Prostate gland (tissue), 2 donors: ENCODE measurements at regions of chr14 and their contacts with region 1.

Region 1: DNA sequence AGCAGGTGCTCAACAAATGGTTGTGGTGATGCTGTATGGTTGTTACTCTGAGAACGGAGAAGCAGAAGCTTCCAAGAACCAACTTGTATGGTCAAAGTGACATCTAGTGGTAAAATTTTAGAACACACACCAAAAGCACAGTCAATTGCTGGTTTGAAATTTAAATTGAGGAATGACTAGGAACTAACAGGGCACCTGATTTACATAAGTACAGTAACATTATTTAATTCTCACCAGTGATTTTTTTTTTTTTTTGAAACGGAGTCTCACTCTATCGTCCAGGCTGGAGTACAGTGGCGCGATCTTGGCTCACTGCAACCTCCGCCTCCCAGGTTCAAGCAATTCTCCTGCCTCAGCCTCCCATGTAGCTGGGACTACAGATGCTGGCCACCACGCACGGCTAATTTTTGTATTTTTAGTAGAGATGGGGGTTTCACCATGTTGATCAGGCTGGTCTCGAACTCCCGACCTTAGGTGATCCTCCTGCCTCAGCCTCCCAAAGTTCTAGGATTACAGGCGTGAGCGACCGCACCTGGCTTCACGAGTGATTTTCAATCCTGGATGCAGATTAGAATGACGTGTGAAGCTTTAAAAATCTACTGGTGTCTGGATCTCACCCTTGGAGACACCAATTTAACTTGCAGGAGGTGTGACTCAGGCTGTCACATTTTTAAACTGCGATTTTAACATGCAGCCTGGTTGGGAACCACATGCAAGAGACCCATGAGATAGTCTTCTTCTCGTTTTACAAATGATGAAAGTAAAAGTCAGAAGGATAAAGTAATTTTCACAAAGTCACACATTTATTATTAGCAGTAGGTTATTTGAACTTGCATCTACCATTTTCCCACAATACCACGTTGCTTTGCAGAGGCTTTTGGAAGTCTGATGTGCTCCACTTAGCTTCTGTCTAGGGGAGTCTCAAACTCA is 14.1 kb upstream of the NUMB start:
- DNase-seq: peak; percentile 23
- H3K4me3 ChIP-seq: no peak overlapping the region
- H3K27ac ChIP-seq: no peak overlapping the region
- H3K4me1 ChIP-seq: no peaks in the 10 kb centered on the region
- H3K27me3 ChIP-seq: no peaks in the 10 kb centered on the region
- CTCF ChIP-seq: peak; percentile 23 to 82 (median 64)
- POLR2A ChIP-seq: no peak

Region 2: GRCh38 chr14:72926292-72927028 is 546.0 kb before region 1 on chr14 and contains the start of gene DCAF4:
- intact Hi-C with region 1: no loop called
- DNase-seq: peak; percentile 97
- H3K4me3 ChIP-seq: peak within 1 kb of the TSS; percentile 53 to 55
- H3K27ac ChIP-seq: peak within 1 kb of the TSS; percentile 33 to 53
- H3K4me1 ChIP-seq: no peaks in the 10 kb centered on the region
- H3K27me3 ChIP-seq: no peaks in the 10 kb centered on the region
- CTCF ChIP-seq: peak in 1 of 4 experiments; percentile 7
- POLR2A ChIP-seq: no peak
- total RNA-seq, gene DCAF4: 8.9 to 29.6 TPM

Region 3: GRCh38 chr14:73173092-73173735 is 299.2 kb before region 1 on chr14:
- intact Hi-C with region 1: loop called (anchors 2 kb)
- DNase-seq: no peak
- H3K4me3 ChIP-seq: no peak overlapping the region
- H3K27ac ChIP-seq: no peak overlapping the region
- H3K4me1 ChIP-seq: no peaks in the 10 kb centered on the region
- H3K27me3 ChIP-seq: no peaks in the 10 kb centered on the region
- CTCF ChIP-seq: peak in 3 of 4 experiments; percentile 26 to 53 (median 41)
- POLR2A ChIP-seq: no peak

Region 4: DNA sequence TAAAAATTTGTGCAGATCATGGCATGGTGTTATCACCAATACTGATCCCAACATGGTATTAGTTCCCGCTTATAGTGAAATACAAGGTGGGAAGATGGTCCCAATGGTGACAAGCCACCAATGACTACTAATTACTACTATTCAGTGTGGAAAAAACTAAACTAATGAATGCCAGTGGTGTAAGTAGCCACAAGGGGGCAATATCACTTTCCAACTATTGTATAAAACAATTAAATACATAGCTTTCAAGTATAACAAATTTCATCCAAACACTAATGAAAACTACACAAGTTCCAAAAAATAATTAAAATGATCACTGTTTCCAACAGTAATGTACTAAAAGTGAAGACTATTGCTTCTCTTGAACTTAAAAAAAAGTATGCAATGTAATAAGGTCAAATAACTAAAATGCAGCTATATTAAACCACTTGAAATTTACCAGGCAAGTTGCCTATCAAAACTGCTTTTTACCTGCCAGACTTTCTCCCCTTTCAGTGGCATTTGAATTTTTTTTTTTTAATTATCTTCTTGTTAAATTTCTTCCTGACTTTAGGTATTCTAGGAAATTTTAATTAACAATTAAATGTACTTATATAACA is 177.2 kb before region 1 on chr14:
- intact Hi-C with region 1: loop called (anchors 2 kb)
- DNase-seq: peak; percentile 13
- H3K4me3 ChIP-seq: no peak overlapping the region
- H3K27ac ChIP-seq: no peak overlapping the region
- H3K4me1 ChIP-seq: no peaks in the 10 kb centered on the region
- H3K27me3 ChIP-seq: no peaks in the 10 kb centered on the region
- CTCF ChIP-seq: peak; percentile 46 to 75 (median 66)
- POLR2A ChIP-seq: no peak

Region 5: GRCh38 chr14:73358187-73358586 is 114.3 kb before region 1 on chr14:
- intact Hi-C with region 1: no loop called
- DNase-seq: no peak
- H3K4me3 ChIP-seq: no peak overlapping the region
- H3K27ac ChIP-seq: no peak overlapping the region
- H3K4me1 ChIP-seq: no peaks in the 10 kb centered on the region
- H3K27me3 ChIP-seq: no peaks in the 10 kb centered on the region
- CTCF ChIP-seq: no peak
- POLR2A ChIP-seq: no peak